ENCODE measurements at regions of chr1 and their contacts with region 1.

Region 1: DNA sequence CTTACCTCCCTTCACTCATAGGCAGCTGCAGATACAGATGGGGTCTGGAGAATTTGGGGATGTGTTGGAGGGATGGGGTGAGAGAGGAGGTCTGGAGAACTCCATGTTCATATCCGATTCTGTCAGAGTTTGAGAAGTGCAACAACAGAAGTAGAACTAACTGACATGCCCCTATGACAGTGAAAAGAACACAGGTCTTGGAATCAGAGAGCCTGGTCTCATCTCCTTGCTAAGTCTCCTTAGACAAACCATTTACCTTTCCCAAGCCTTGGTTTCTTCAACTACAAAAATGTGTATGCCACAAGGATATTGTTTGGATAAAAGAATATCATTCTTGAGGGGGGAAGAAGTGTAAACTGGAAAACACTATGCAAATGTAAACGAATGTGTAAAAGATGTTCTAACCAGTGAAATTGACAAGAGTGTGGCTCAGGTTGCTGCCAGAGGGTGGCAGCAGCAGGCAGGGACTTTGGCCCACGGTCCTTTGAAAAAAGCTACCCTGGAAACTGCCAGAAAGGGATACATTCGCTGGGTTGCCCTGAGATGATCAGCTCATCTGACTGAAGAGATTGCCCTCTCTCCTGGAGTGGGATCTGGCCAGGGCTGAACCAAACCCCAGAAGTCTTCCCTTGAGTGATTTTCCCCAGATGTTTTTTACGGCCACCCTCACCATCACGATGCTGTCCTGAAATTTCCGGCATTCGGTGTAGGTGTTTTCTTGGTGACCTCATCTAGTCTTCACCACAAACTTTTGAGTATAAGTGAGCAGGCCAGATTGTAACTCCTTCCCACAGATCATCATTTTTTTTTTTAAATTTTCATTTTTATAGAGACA is 17.0 kb upstream of the CD2 start:
- DNase-seq: peak; percentile 84
- H3K4me3 Mint-ChIP-seq: peak overlapping the region; percentile 74
- H3K27ac Mint-ChIP-seq: peak overlapping the region; percentile 100
- H3K4me1 Mint-ChIP-seq: peaks cover 68% of the 10 kb centered on the region
- H3K27me3 Mint-ChIP-seq: no peaks in the 10 kb centered on the region

Region 2: GRCh38 chr1:116570358-116571200 is 166.7 kb before region 1 on chr1 and contains the start of gene CD58:
- CTCF ChIA-PET with region 1: interaction called, 4 read pairs
- POLR2A ChIA-PET with region 1: no interaction called
- intact Hi-C with region 1: loop called (anchors 5 kb)
- DNase-seq: peak; percentile 92
- H3K4me3 Mint-ChIP-seq: peak within 1 kb of the TSS; percentile 99
- H3K27ac Mint-ChIP-seq: peak within 1 kb of the TSS; percentile 93
- H3K4me1 Mint-ChIP-seq: peaks cover 72% of the 10 kb centered on the region
- H3K27me3 Mint-ChIP-seq: no peaks in the 10 kb centered on the region
- total RNA-seq, gene CD58: 21.9 to 27.2 TPM

Region 3: GRCh38 chr1:116754198-116754977 is 17.2 kb after region 1 on chr1 and contains the start of gene CD2:
- CTCF ChIA-PET with region 1: interaction called, 60 read pairs
- POLR2A ChIA-PET with region 1: interaction called, 803 read pairs
- intact Hi-C with region 1: loop called (anchors 1 kb)
- DNase-seq: peak; percentile 78
- H3K4me3 Mint-ChIP-seq: peak within 1 kb of the TSS; percentile 99
- H3K27ac Mint-ChIP-seq: peak within 1 kb of the TSS; percentile 99
- H3K4me1 Mint-ChIP-seq: peaks cover 40% of the 10 kb centered on the region
- H3K27me3 Mint-ChIP-seq: no peaks in the 10 kb centered on the region
- total RNA-seq, gene CD2: 335 to 355 TPM

Region 4: GRCh38 chr1:116806245-116806644 is 69.0 kb after region 1 on chr1:
- CTCF ChIA-PET with region 1: interaction called, 15 read pairs
- POLR2A ChIA-PET with region 1: interaction called, 182 read pairs
- intact Hi-C with region 1: loop called (anchors 1 kb)
- DNase-seq: peak; percentile 91
- H3K4me3 Mint-ChIP-seq: peak overlapping the region; percentile 79
- H3K27ac Mint-ChIP-seq: peak overlapping the region; percentile 99
- H3K4me1 Mint-ChIP-seq: peaks cover 78% of the 10 kb centered on the region
- H3K27me3 Mint-ChIP-seq: no peaks in the 10 kb centered on the region

Region 5: DNA sequence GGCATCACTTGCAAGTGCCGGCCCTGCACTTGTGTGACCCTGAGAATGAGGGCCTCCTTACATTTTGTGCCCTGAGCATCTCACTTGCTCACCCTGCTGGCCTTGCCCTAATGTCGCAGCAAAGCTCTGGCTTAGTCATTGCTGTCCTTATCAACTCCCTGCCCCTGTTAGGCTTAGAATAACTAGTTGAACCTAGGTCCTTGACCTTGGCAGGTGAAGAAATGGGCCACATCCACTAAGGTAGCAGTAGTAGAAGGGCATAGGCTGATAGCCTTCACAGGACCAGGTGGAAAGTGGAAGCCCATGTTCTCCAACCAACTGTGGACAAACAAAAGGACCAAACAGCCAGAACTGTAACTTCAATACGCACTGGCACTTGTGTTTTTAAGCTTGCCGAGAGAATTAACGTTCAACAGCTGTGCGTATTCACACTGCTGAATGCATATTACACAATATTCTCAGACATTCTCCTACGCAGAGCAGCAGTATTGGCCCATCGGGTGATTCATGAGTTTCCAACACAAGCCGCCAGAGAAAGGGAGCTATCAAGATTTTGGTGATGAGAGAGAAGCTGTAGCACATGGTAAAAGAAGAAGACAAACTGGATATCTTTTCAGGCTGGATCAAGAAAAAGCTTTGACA is 144.8 kb after region 1 on chr1:
- CTCF ChIA-PET with region 1: interaction called, 7 read pairs
- POLR2A ChIA-PET with region 1: interaction called, 12 read pairs
- intact Hi-C with region 1: loop called (anchors 1 kb)
- DNase-seq: peak; percentile 66
- H3K4me3 Mint-ChIP-seq: no peak overlapping the region
- H3K27ac Mint-ChIP-seq: no peak overlapping the region
- H3K4me1 Mint-ChIP-seq: peaks cover 19% of the 10 kb centered on the region
- H3K27me3 Mint-ChIP-seq: no peaks in the 10 kb centered on the region

Region 6: GRCh38 chr1:117077267-117077666 is 340.0 kb after region 1 on chr1:
- CTCF ChIA-PET with region 1: interaction called, 3 read pairs
- POLR2A ChIA-PET with region 1: interaction called, 5 read pairs
- intact Hi-C with region 1: loop called (anchors 1 kb)
- DNase-seq: peak; percentile 79
- H3K4me3 Mint-ChIP-seq: no peak overlapping the region
- H3K27ac Mint-ChIP-seq: peak overlapping the region; percentile 71
- H3K4me1 Mint-ChIP-seq: peaks cover 30% of the 10 kb centered on the region
- H3K27me3 Mint-ChIP-seq: no peaks in the 10 kb centered on the region